IMR-90 (cell line): ENCODE measurements at regions of chr19 and their contacts with region 1.

Region 1: GRCh38 chr19:31110331-31110730 is 238.9 kb downstream of the TSHZ3 start:
- DNase-seq: peak; percentile 45
- ATAC-seq: peak; percentile 87
- H3K4me3 ChIP-seq: no peak overlapping the region
- H3K27ac ChIP-seq: no peak overlapping the region
- H3K4me1 ChIP-seq: 0 out of 2 replicates have a peak, but pooled peaks cover 2% of the 10 kb centered on the region
- H3K27me3 ChIP-seq: no peaks in the 10 kb centered on the region; the same call in 1 of the 2 replicates
- CTCF ChIP-seq: peak; percentile 59
- POLR2A ChIP-seq: no peak
- RAD21 ChIP-seq: peak; percentile 74

Region 2: DNA sequence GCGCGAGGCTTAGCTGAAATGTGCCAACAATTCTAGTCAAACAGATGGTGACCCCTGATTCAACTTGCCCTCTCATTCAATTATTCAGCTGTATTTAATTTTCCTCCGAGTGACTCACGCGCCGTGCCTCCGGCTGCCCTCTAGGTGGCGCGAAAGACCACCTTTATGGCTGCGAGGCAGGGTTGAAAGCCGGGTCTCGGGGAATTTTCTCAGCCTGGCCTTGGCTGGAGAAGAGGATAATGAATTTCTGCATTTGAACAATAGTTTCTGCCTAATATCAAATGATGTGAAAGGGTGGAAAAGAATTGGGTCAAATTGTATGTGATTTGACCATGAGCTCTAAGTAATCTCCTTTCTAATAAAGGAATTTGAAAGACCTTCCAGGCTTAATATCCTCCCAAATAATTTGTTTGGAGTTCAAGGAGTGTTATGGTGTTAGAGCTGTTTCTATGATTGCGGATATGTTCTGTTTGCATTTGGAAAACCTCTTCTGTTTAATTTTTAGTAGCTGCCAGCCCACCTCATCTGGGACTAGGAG is 427.3 kb before region 1 on chr19:
- CTCF ChIA-PET with region 1: no interaction called
- POLR2A ChIA-PET with region 1: no interaction called
- dilution Hi-C with region 1: no loop called
- in situ Hi-C with region 1: no loop called
- intact Hi-C with region 1: loop called (anchors 10 kb)
- DNase-seq: peak; percentile 82
- ATAC-seq: peak; percentile 97
- H3K4me3 ChIP-seq: no peak overlapping the region
- H3K27ac ChIP-seq: no peak overlapping the region
- H3K4me1 ChIP-seq: no peaks in the 10 kb centered on the region
- H3K27me3 ChIP-seq: peaks cover 11% of the 10 kb centered on the region
- CTCF ChIP-seq: peak; percentile 97
- POLR2A ChIP-seq: no peak; the same call in 1 of the 2 replicates
- RAD21 ChIP-seq: peak; percentile 90

Region 3: DNA sequence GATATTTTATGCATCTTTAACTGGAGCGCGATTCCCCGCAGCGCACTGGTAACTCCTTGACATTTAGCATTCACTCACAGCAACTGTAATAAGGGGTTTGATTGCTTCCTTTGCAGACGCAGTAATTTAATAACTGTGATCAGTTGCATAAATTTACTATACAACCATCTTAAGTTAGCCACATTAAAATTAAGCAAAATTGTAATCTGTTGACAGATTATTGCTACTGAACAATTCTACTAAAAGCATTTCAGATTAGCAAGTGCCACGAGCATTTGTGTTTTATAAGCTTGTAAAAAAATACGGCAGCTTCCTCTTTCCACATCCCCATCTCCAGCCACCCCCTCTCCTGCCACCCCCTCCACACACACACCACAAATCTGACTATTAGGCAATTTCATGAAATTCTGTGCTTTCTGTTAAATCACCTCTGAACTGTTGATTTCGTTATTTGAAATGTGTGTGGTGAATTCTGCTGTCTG is 194.5 kb after region 1 on chr19:
- CTCF ChIA-PET with region 1: no interaction called
- POLR2A ChIA-PET with region 1: no interaction called
- dilution Hi-C with region 1: no loop called
- in situ Hi-C with region 1: no loop called
- intact Hi-C with region 1: no loop called
- DNase-seq: no peak
- ATAC-seq: no peak
- H3K4me3 ChIP-seq: no peak overlapping the region
- H3K27ac ChIP-seq: no peak overlapping the region
- H3K4me1 ChIP-seq: peaks cover 7% of the 10 kb centered on the region
- H3K27me3 ChIP-seq: no peaks in the 10 kb centered on the region
- CTCF ChIP-seq: no peak
- POLR2A ChIP-seq: no peak
- RAD21 ChIP-seq: no peak

Region 4: DNA sequence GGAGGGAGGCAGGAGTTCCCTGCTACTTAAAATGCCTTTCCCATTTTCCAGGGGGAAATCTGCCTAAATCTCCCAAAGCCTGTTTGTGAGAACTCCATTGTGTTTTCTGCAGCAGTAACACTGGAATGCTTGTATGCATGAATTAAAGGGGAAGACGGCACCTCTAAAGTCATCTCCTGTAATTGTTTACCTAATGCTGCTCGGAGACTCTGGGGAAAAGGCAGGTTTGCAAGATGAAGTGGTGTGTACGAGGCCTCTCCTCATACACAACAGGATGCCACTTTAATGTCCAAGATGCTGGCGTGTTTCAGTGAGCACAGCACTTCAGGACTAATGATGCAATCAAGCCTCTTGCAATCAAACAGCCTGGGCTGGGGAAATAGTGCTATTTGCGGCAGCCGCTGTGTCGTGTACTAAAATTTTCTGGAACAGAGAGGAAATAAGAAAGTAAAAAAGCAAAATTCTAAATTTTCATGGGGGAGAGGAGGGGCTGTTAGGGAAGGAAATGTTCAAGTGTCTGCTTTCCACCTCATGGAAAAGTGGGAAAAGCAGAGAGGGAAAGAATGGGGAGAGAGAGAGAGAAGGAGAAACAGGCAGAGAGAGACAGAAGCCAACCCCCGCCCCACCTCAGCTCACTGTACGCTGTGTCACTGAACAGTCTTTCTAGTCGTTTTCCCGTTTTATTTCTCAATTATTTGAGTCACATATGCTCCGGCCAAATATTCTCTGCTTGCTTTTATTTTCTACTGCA is 206.0 kb after region 1 on chr19:
- CTCF ChIA-PET with region 1: no interaction called
- POLR2A ChIA-PET with region 1: no interaction called
- dilution Hi-C with region 1: no loop called
- in situ Hi-C with region 1: no loop called
- intact Hi-C with region 1: loop called (anchors 5 kb)
- DNase-seq: peak; percentile 61
- ATAC-seq: peak; percentile 27; the same call in 1 of the 2 replicates
- H3K4me3 ChIP-seq: peak overlapping the region; percentile 11; the same call in 1 of the 2 replicates
- H3K27ac ChIP-seq: peak overlapping the region; percentile 56; the same call in 1 of the 2 replicates
- H3K4me1 ChIP-seq: peaks cover 24% of the 10 kb centered on the region
- H3K27me3 ChIP-seq: no peaks in the 10 kb centered on the region
- CTCF ChIP-seq: no peak
- POLR2A ChIP-seq: no peak
- RAD21 ChIP-seq: no peak